ENCODE measurements at regions of chr3 and their contacts with region 1.

Region 1: GRCh38 chr3:172710664-172711453 is at the start of gene NCEH1:
- DNase-seq: peak; percentile 92 to 95 (median 95)
- ATAC-seq: peak; percentile 99
- H3K4me3 ChIP-seq: peak within 1 kb of the TSS; percentile 89
- H3K27ac ChIP-seq: peak within 1 kb of the TSS; percentile 99
- H3K4me1 ChIP-seq: no peaks in the 10 kb centered on the region
- H3K27me3 ChIP-seq: no peaks in the 10 kb centered on the region
- total RNA-seq, gene NCEH1: 25.4 to 39.4 (median 28.1) TPM

Region 2: GRCh38 chr3:172550347-172550943 is 160.4 kb before region 1 on chr3:
- intact Hi-C with region 1: no loop called
- DNase-seq: no peak
- ATAC-seq: no peak
- H3K4me3 ChIP-seq: no peak overlapping the region
- H3K27ac ChIP-seq: no peak overlapping the region
- H3K4me1 ChIP-seq: no peaks in the 10 kb centered on the region
- H3K27me3 ChIP-seq: no peaks in the 10 kb centered on the region

Region 3: DNA sequence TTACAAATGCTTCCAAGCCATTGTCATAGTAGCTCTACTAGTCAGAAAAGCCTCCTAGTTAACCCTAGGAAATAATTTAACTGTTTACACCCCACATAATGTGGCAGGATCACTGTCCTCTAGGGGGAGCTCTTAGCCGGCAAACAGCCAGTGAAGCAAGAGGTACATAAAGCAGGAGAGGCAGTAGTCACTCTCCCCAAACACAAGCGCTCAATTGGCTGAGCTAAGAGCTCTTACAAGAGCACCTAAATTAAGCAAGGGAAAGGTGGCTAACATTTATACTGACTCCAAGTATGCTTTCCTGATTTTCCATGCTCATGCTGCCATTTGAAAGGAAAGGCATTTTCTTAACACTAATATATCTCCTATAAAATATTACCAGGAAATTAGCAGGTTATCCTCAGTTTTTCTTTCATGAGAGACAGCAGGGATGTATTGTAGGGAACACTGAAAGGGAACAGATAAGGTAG is 37.6 kb before region 1 on chr3:
- intact Hi-C with region 1: loop called in 2 of 4 experiments (anchors 5 kb)
- DNase-seq: peak; percentile 55 to 77 (median 73)
- ATAC-seq: peak; percentile 54 to 70
- H3K4me3 ChIP-seq: no peak overlapping the region
- H3K27ac ChIP-seq: no peak overlapping the region
- H3K4me1 ChIP-seq: peaks cover 3% of the 10 kb centered on the region
- H3K27me3 ChIP-seq: no peaks in the 10 kb centered on the region

Region 4: GRCh38 chr3:172787746-172788145 is 76.9 kb after region 1 on chr3:
- intact Hi-C with region 1: no loop called
- DNase-seq: no peak
- ATAC-seq: no peak
- H3K4me3 ChIP-seq: no peak overlapping the region
- H3K27ac ChIP-seq: no peak overlapping the region
- H3K4me1 ChIP-seq: no peaks in the 10 kb centered on the region
- H3K27me3 ChIP-seq: no peaks in the 10 kb centered on the region

Region 5: GRCh38 chr3:172832983-172833382 is 122.1 kb after region 1 on chr3:
- intact Hi-C with region 1: no loop called
- DNase-seq: no peak
- ATAC-seq: no peak
- H3K4me3 ChIP-seq: no peak overlapping the region
- H3K27ac ChIP-seq: no peak overlapping the region
- H3K4me1 ChIP-seq: no peaks in the 10 kb centered on the region
- H3K27me3 ChIP-seq: no peaks in the 10 kb centered on the region

Region 6: GRCh38 chr3:172885704-172886103 is 174.8 kb after region 1 on chr3:
- intact Hi-C with region 1: no loop called
- DNase-seq: no peak
- ATAC-seq: no peak
- H3K4me3 ChIP-seq: no peak overlapping the region
- H3K27ac ChIP-seq: no peak overlapping the region
- H3K4me1 ChIP-seq: no peaks in the 10 kb centered on the region
- H3K27me3 ChIP-seq: no peaks in the 10 kb centered on the region